ENCODE measurements at regions of chr12 and their contacts with region 1.

Region 1: GRCh38 chr12:10235761-10236631 is 23.3 kb downstream of the GABARAPL1 start:
- DNase-seq: peak; percentile 48 to 71 (median 62)
- H3K4me3 ChIP-seq: no peak overlapping the region
- H3K27ac ChIP-seq: no peak overlapping the region
- H3K4me1 ChIP-seq: peaks cover 0 to 2% (median 1%) of the 10 kb centered on the region in 4 experiments
- H3K27me3 ChIP-seq: no peaks in the 10 kb centered on the region

Region 2: DNA sequence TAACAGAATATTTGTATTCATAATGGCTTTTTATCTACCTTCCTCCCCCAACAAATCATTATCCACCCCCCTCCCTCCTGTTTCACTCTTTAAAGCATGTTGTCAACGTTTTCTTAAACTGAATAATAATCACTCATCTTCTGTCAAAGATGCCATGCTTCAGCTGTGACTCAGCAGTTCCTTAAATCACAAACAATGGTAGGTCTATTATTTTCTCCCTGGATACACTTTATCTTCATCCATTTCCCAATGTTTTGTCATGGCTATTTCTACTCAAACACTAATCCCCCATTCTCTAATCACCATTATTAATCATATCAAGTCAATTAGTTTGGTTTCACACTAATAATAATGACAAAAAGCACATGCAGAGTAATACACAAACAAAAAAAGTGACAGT is 219.1 kb before region 1 on chr12:
- CTCF ChIA-PET with region 1: no interaction called
- POLR2A ChIA-PET with region 1: no interaction called
- DNase-seq: peak in 2 of 3 donors; percentile 61 to 68
- H3K4me3 ChIP-seq: no peak overlapping the region
- H3K27ac ChIP-seq: peak overlapping the region in 1 of 2 experiments; percentile 63
- H3K4me1 ChIP-seq: peaks cover 0 to 25% (median 19%) of the 10 kb centered on the region in 4 experiments
- H3K27me3 ChIP-seq: no peaks in the 10 kb centered on the region

Region 3: GRCh38 chr12:10212201-10213131 is 23.5 kb before region 1 on chr12 and contains the start of gene GABARAPL1:
- CTCF ChIA-PET with region 1: no interaction called
- POLR2A ChIA-PET with region 1: no interaction called
- DNase-seq: peak; percentile 90 to 93 (median 91)
- H3K4me3 ChIP-seq: peak within 1 kb of the TSS; percentile 78 to 91 (median 83)
- H3K27ac ChIP-seq: peak within 1 kb of the TSS; percentile 68 to 90
- H3K4me1 ChIP-seq: peaks cover 5 to 35% (median 18%) of the 10 kb centered on the region in 4 experiments
- H3K27me3 ChIP-seq: no peaks in the 10 kb centered on the region

Region 4: GRCh38 chr12:10673660-10674384 is 437.8 kb after region 1 on chr12 and contains the start of gene STYK1:
- CTCF ChIA-PET with region 1: interaction called, 13 read pairs
- POLR2A ChIA-PET with region 1: no interaction called
- DNase-seq: peak; percentile 96 to 98 (median 97)
- H3K4me3 ChIP-seq: peak within 1 kb of the TSS; percentile 8 to 75 (median 65)
- H3K27ac ChIP-seq: peak within 1 kb of the TSS; percentile 60 to 78
- H3K4me1 ChIP-seq: peaks cover 4 to 38% (median 27%) of the 10 kb centered on the region in 4 experiments
- H3K27me3 ChIP-seq: no peaks in the 10 kb centered on the region